Tibial artery (tissue), 4 donors: ENCODE measurements at regions of chr10 and their contacts with region 1.

Region 1: DNA sequence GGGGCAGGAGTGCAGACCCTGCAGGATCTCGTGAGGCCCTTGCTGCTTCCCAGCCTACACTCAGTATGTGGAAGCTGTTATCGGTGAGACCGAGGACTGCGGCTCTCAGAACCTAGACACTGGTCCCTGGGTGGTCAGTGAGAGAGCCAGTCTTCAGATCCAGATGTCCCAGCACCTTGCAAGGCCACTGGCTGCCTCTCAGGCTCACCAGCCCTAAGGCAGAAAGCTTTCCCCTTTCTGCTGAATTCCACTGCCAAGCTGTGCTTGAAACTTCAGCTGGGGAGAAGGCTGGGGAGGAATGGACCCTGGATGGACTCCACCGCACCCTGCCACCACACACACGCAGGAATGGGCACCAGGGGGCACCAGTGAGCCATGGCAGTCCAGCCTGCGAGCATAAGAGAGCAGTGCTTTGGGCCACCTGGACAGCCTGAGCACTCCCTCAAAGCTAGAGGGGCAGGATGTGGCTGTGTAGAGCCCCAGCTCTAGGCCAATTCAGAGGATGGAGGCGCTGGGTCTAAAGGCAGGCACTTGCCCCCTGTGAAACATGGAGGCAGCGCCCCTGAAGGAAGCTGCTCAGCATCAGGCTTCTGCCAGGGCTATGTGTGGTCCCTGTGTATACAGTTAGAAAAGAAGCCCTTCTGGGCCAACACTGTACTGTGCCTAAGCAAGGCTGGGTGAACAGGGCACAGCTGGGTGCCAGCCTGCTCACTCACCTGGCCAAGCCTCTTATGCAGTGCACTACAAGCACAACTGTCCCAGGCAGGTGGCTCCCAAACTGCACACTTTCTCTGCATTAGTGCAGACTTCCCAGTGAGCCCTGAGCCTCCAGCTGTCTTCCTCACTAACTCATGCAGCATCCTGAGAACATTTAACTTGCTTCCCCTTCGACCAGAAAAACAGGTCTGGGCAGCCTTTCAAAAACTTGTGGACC is 21.6 kb downstream of the TMEM72 start:
- DNase-seq: peak; percentile 92 to 94
- H3K4me3 ChIP-seq: no peak overlapping the region
- H3K27ac ChIP-seq: peak overlapping the region; percentile 1 to 8
- H3K4me1 ChIP-seq: peaks cover 0 to 34% (median 22%) of the 10 kb centered on the region in 4 donors
- H3K27me3 ChIP-seq: no peaks in the 10 kb centered on the region
- CTCF ChIP-seq: peak; percentile 94 to 98

Region 2: GRCh38 chr10:45249978-45250693 is 317.4 kb after region 1 on chr10:
- intact Hi-C with region 1: loop called (anchors 10 kb)
- DNase-seq: no peak
- H3K4me3 ChIP-seq: no peak overlapping the region
- H3K27ac ChIP-seq: no peak overlapping the region
- H3K4me1 ChIP-seq: no peaks in the 10 kb centered on the region
- H3K27me3 ChIP-seq: peaks cover 0 to 2% of the 10 kb centered on the region in 2 donors
- CTCF ChIP-seq: peak; percentile 52 to 56